MCF 10A (cell line): ENCODE measurements at regions of chr9 and their contacts with region 1.

Region 1: GRCh38 chr9:89000973-89001916 is 10.0 kb downstream of the S1PR3 start:
- DNase-seq: peak; percentile 91
- H3K4me3 Mint-ChIP-seq: peak overlapping the region; percentile 48
- H3K27ac Mint-ChIP-seq: no peak overlapping the region
- H3K4me1 Mint-ChIP-seq: peaks cover 10% of the 10 kb centered on the region
- H3K27me3 Mint-ChIP-seq: no peaks in the 10 kb centered on the region
- CTCF ChIP-seq: peak; percentile 84

Region 2: GRCh38 chr9:87950765-87951488 is 1050.3 kb before region 1 on chr9:
- CTCF ChIA-PET with region 1: interaction called, 3 read pairs
- POLR2A ChIA-PET with region 1: no interaction called
- intact Hi-C with region 1: loop called (anchors 2 kb)
- DNase-seq: peak; percentile 56
- H3K4me3 Mint-ChIP-seq: no peak overlapping the region
- H3K27ac Mint-ChIP-seq: no peak overlapping the region
- H3K4me1 Mint-ChIP-seq: no peaks in the 10 kb centered on the region
- H3K27me3 Mint-ChIP-seq: no peaks in the 10 kb centered on the region
- CTCF ChIP-seq: peak; percentile 75

Region 3: DNA sequence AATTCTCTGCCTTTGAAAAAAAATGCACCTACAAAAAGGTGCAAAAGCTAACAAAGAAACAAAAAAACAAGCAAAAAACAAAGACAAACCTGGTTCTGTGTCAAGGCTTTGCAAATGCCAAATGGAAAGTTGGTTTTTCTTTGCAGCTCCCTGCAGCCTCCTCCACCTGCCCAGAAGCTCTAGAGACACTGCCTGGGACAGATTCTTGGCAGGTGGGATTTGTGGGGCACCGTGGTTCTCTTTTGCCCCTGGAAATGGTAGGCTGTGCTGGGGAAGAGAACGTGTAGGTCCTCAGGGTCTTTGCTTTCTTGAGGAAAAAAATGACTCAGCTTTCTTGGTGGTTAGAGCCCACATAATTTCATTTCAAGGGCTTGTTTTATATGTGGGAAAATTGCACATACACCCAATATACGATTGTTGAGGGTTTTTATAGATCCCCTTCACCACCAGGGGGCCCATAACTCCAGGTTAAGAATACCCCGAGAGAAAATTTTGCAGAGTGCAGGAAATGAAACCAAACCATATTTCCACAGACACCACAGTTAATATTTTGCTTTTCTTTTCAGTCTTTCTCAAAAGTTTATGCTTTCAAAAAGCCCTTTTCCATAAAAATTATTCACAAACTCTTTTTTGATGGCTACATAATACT is 407.6 kb before region 1 on chr9:
- CTCF ChIA-PET with region 1: interaction called, 50 read pairs
- POLR2A ChIA-PET with region 1: no interaction called
- intact Hi-C with region 1: loop called (anchors 1 kb)
- DNase-seq: peak; percentile 73
- H3K4me3 Mint-ChIP-seq: no peak overlapping the region
- H3K27ac Mint-ChIP-seq: no peak overlapping the region
- H3K4me1 Mint-ChIP-seq: no peaks in the 10 kb centered on the region
- H3K27me3 Mint-ChIP-seq: no peaks in the 10 kb centered on the region
- CTCF ChIP-seq: peak; percentile 65

Region 4: DNA sequence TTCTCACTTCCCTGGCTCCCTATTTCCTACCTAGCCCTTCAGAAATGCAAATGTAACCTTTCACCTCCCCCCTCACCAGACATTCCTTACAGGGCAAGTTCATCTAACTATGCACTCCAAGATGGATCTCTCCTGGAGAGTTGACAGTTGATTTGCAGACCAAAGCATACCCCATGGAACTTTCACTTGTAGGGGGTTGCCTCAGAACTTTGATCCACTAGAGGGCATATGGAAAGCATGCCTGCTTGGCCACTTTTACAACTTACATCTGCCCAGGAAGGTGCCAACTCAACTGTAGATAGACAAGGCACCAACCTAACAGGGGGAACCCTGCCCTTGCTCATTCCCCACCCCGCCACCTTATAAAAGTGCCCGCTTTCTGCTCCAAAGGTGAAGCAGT is 278.5 kb before region 1 on chr9:
- CTCF ChIA-PET with region 1: interaction called, 3 read pairs
- POLR2A ChIA-PET with region 1: no interaction called
- intact Hi-C with region 1: loop called (anchors 2 kb)
- DNase-seq: peak; percentile 55
- H3K4me3 Mint-ChIP-seq: no peak overlapping the region
- H3K27ac Mint-ChIP-seq: no peak overlapping the region
- H3K4me1 Mint-ChIP-seq: peaks cover 7% of the 10 kb centered on the region
- H3K27me3 Mint-ChIP-seq: no peaks in the 10 kb centered on the region
- CTCF ChIP-seq: peak; percentile 47

Region 5: GRCh38 chr9:89278997-89279739 is 277.9 kb after region 1 on chr9:
- CTCF ChIA-PET with region 1: interaction called, 7 read pairs
- POLR2A ChIA-PET with region 1: no interaction called
- intact Hi-C with region 1: loop called (anchors 2 kb)
- DNase-seq: peak; percentile 72
- H3K4me3 Mint-ChIP-seq: no peak overlapping the region
- H3K27ac Mint-ChIP-seq: no peak overlapping the region
- H3K4me1 Mint-ChIP-seq: peaks cover 12% of the 10 kb centered on the region
- H3K27me3 Mint-ChIP-seq: no peaks in the 10 kb centered on the region
- CTCF ChIP-seq: peak; percentile 51